Dendritic cell treated with granulocyte-macrophage colony-stimulating factor and Interleukin-4, amounts not matched to agents 40 ng/mL and 50 ng/mL, for 4 days (primary cell): ENCODE measurements at regions of chr7 and their contacts with region 1.

Region 1: DNA sequence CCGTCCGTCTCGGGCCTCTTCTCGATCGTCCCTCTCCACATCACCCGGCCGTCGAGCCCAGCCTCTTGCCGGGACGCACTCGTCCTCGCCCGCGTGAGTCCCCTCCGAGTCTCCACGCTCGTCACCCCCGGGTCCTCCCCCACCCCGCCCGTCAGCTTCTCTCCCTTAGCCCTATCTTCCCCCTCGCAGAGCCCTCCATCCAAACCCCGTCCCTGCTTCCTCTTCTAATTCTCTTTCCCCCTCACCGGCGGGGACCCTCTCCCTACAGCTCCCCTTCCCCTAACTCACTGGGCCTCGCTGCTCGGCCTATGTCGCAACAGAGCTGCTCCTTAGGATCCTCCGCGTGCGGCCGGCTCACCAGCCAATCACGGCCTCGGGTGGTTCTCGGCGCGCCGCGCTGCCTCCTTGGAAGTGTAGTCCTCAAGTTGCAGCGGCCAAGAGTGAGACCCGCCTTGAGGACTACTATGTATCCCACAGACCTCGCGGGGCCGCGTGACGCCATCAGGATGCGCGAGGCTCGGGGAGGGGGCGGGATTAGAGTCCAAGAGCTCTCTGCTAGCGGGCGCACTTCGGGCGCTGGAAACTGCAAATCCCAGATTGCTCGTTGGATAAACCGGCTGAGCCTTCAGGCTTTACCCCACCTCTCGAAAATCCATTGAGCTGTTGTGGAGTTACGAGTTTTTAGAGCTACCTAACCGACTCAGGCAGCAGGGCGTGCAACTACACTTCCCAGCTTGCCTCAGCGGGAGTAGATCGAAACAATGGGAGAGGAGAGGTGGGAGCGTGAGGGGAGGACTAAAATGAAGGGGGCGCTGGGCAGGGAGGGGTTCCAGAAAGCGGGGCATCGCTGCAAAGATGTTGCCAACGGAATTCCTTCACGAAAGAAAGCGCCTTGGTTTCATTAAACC is at the start of gene ABCF2:
- H3K4me3 Mint-ChIP-seq: peak within 1 kb of the TSS; percentile 96
- H3K27ac Mint-ChIP-seq: peak within 1 kb of the TSS; percentile 93
- H3K4me1 Mint-ChIP-seq: peaks cover 45% of the 10 kb centered on the region
- H3K27me3 Mint-ChIP-seq: peaks cover 1% of the 10 kb centered on the region

Region 2: GRCh38 chr7:151172273-151173141 is 54.6 kb before region 1 on chr7:
- intact Hi-C with region 1: no loop called
- H3K4me3 Mint-ChIP-seq: no peak overlapping the region
- H3K27ac Mint-ChIP-seq: no peak overlapping the region
- H3K4me1 Mint-ChIP-seq: peaks cover 13% of the 10 kb centered on the region
- H3K27me3 Mint-ChIP-seq: peaks cover 83% of the 10 kb centered on the region

Region 3: DNA sequence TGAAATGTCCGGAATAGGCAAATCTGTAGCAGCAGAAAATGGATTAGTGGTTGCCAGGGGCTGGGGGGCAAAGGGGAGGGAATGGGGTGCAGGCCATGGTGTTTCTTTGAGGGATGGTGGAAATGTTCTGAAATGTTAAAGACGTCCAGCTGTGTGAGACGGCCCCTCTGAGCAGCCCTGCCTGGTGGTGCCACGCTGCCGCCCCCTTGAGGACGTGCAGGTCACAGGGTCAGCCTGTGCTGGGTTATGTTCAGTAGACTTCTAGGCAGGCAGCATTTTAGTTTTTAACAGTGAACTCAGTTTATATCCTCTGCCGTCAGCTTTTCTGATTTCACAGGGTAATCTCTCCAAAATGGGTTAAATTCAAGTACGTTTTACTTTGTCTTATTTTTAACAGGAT is 123.9 kb after region 1 on chr7:
- intact Hi-C with region 1: loop called (anchors 5 kb)
- H3K4me3 Mint-ChIP-seq: no peak overlapping the region
- H3K27ac Mint-ChIP-seq: peak overlapping the region; percentile 82
- H3K4me1 Mint-ChIP-seq: peaks cover 26% of the 10 kb centered on the region
- H3K27me3 Mint-ChIP-seq: no peaks in the 10 kb centered on the region